HCT116 (cell line): ENCODE measurements at regions of chr14 and their contacts with region 1.

Region 1: GRCh38 chr14:71115821-71116567 is 208.7 kb downstream of the PCNX1 start:
- DNase-seq: no peak
- ATAC-seq: no peak
- H3K4me3 ChIP-seq: no peak overlapping the region
- H3K27ac ChIP-seq: no peak overlapping the region
- H3K4me1 ChIP-seq: peaks cover 0 to 12% of the 10 kb centered on the region in 2 experiments; a peak in 2 of 4 replicates
- H3K27me3 ChIP-seq: no peaks in the 10 kb centered on the region
- CTCF ChIP-seq: no peak
- POLR2A ChIP-seq: no peak
- RAD21 ChIP-seq: no peak

Region 2: GRCh38 chr14:71103662-71104484 is 12.1 kb before region 1 on chr14:
- CTCF ChIA-PET with region 1: interaction called, 10 read pairs
- POLR2A ChIA-PET with region 1: no interaction called
- RAD21 ChIA-PET with region 1: no interaction called
- intact Hi-C with region 1: no loop called
- DNase-seq: peak; percentile 41
- ATAC-seq: peak; percentile 54; the same call in 1 of the 2 replicates
- H3K4me3 ChIP-seq: no peak overlapping the region
- H3K27ac ChIP-seq: no peak overlapping the region
- H3K4me1 ChIP-seq: peaks cover 0 to 11% of the 10 kb centered on the region in 2 experiments; a peak in 2 of 4 replicates
- H3K27me3 ChIP-seq: no peaks in the 10 kb centered on the region
- CTCF ChIP-seq: peak; percentile 43 to 88 (median 86); a peak in 5 of 6 replicates
- POLR2A ChIP-seq: no peak
- RAD21 ChIP-seq: peak; percentile 69